PC-9 (cell line): ENCODE measurements at regions of chr3 and their contacts with region 1.

Region 1: DNA sequence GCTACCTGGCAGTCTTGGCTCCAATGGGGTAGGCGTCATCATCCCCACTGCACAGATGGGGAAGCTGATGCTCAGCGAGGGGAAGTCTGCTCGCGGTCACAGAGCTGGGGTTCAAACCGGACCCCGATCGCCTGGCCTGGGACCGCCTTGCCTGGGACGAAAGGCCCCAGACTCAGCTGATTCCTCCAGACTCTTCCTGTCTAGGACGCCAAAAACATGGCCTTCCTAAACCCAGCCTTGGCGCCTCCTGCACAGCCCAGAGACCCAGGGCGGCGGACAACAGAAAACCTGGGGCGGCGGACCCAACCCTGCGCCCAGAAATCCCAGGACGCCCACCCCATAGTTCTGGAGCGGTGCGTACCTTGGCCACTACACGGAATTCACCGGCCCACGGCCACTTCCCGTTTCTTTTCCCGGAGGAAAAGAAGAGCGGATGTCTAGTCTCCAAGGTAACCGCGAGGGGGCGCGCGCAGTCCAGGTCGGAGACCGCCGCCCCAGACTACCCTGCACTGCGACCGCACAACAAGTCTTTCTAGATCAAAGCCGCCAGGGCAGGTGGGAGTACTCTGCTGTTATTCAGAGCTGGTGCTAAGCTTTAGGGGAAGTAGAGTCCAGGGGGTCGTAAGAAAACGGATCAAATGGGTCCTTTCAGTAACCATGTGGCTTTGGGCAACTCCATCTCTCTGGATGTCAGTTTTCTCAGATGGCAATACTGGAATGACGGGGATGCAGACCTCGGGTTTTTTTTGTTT is 4.9 kb upstream of the IL17RD start:
- DNase-seq: peak; percentile 60 to 75
- H3K4me3 ChIP-seq: peak overlapping the region; percentile 54
- H3K27ac ChIP-seq: no peak overlapping the region
- H3K4me1 ChIP-seq: peaks cover 3% of the 10 kb centered on the region; the same call in 1 of the 2 replicates
- H3K27me3 ChIP-seq: no peaks in the 10 kb centered on the region
- CTCF ChIP-seq: peak; percentile 81

Region 2: GRCh38 chr3:57130571-57131209 is 39.4 kb before region 1 on chr3:
- CTCF ChIA-PET with region 1: no interaction called
- POLR2A ChIA-PET with region 1: no interaction called
- intact Hi-C with region 1: no loop called
- DNase-seq: no peak
- H3K4me3 ChIP-seq: no peak overlapping the region
- H3K27ac ChIP-seq: no peak overlapping the region
- H3K4me1 ChIP-seq: no peaks in the 10 kb centered on the region
- H3K27me3 ChIP-seq: no peaks in the 10 kb centered on the region
- CTCF ChIP-seq: no peak

Region 3: GRCh38 chr3:57279685-57280084 is 109.6 kb after region 1 on chr3:
- CTCF ChIA-PET with region 1: no interaction called
- POLR2A ChIA-PET with region 1: no interaction called
- intact Hi-C with region 1: no loop called
- DNase-seq: no peak
- H3K4me3 ChIP-seq: no peak overlapping the region
- H3K27ac ChIP-seq: no peak overlapping the region
- H3K4me1 ChIP-seq: no peaks in the 10 kb centered on the region
- H3K27me3 ChIP-seq: no peaks in the 10 kb centered on the region
- CTCF ChIP-seq: no peak

Region 4: DNA sequence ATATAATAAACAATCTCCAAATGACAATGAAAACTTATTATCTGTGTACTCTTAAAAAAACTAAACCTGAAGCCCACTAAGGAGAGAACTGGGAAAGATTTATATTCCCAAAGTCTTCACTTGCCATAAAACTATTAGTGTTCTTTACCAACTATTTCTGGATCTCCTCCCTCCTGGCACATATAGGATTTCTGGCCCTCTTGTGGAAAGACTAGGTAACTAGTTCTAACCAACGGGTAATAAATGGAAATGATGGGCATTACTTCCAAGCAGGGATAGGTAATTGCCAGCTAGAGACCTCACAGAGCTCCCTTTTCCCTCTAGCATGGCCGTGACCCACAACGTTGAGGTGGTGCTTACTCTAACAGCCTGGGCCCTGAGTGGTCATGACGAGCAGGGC is 264.0 kb after region 1 on chr3:
- CTCF ChIA-PET with region 1: no interaction called
- POLR2A ChIA-PET with region 1: no interaction called
- intact Hi-C with region 1: loop called (anchors 5 kb)
- DNase-seq: peak; percentile 6 to 40
- H3K4me3 ChIP-seq: no peak overlapping the region
- H3K27ac ChIP-seq: no peak overlapping the region
- H3K4me1 ChIP-seq: no peaks in the 10 kb centered on the region
- H3K27me3 ChIP-seq: no peaks in the 10 kb centered on the region
- CTCF ChIP-seq: peak; percentile 71